ENCODE measurements at regions of chr14 and their contacts with region 1.

Region 1: GRCh38 chr14:99884834-99885648 is 91.8 kb downstream of the EML1 start:
- DNase-seq: no peak
- H3K4me3 ChIP-seq: no peak overlapping the region
- H3K27me3 ChIP-seq: no peaks in the 10 kb centered on the region
- CTCF ChIP-seq: peak; percentile 68

Region 2: GRCh38 chr14:99706107-99706900 is 178.7 kb before region 1 on chr14:
- CTCF ChIA-PET with region 1: no interaction called
- POLR2A ChIA-PET with region 1: no interaction called
- DNase-seq: no peak
- H3K4me3 ChIP-seq: no peak overlapping the region
- H3K27me3 ChIP-seq: peaks cover 3% of the 10 kb centered on the region; the same call in 1 of the 2 replicates
- CTCF ChIP-seq: no peak

Region 3: GRCh38 chr14:99802301-99803105 is 82.5 kb before region 1 on chr14:
- CTCF ChIA-PET with region 1: no interaction called
- POLR2A ChIA-PET with region 1: no interaction called
- DNase-seq: no peak
- H3K4me3 ChIP-seq: no peak overlapping the region
- H3K27me3 ChIP-seq: 0 out of 2 replicates have a peak, but pooled peaks cover 4% of the 10 kb centered on the region
- CTCF ChIP-seq: no peak

Region 4: GRCh38 chr14:99872786-99873440 is 12.1 kb before region 1 on chr14:
- CTCF ChIA-PET with region 1: interaction called, 11 read pairs
- POLR2A ChIA-PET with region 1: no interaction called
- DNase-seq: no peak
- H3K4me3 ChIP-seq: no peak overlapping the region
- H3K27me3 ChIP-seq: peaks cover 2% of the 10 kb centered on the region; the same call in 1 of the 2 replicates
- CTCF ChIP-seq: no peak

Region 5: DNA sequence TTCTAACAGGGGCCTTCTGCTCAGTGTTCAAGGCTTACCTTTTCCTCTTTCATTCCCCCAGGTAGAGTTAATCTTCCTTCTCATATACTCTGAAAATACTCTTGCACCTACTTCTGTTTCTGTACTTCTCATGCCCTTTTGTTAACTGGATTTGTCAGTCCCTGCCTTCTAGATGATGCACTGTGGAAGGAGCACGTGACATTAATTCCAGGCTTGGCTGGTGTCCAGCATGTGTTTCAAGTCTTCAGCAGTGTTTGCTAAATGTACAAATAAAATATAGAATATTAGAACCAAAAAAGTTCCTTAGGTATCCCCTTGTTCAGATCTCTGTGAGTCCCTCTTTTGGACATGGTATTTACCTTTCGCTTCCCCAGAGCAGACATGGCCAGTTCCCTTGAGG is 152.3 kb after region 1 on chr14:
- CTCF ChIA-PET with region 1: no interaction called
- POLR2A ChIA-PET with region 1: no interaction called
- DNase-seq: no peak
- H3K4me3 ChIP-seq: no peak overlapping the region
- H3K27me3 ChIP-seq: no peaks in the 10 kb centered on the region
- CTCF ChIP-seq: no peak

Measured in BJ (cell line).